ENCODE measurements at regions of chr18 and their contacts with region 1.

Region 1: DNA sequence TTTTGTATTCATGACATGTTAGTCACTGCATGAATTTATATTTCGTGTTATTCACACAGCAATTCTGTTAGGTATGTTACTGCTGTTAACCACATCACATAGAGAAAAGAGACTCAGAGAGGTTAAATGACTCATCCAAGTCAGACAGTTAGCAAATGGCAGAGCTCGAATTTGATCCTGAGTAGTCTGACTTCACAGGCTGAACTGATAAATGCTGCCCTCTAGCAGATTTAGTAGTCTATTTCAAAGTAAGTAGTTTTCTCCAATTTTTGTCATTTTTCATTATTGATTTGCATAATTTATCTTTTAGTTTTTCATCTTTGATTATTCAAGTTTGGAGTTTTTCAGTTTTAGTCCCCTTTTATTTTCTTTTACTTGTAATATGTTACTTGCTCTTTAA is 58.3 kb downstream of the WDR7 start:
- DNase-seq: peak; percentile 56
- H3K4me3 Mint-ChIP-seq: no peak overlapping the region
- H3K27ac Mint-ChIP-seq: no peak overlapping the region
- H3K4me1 Mint-ChIP-seq: peaks cover 3% of the 10 kb centered on the region
- H3K27me3 Mint-ChIP-seq: no peaks in the 10 kb centered on the region

Region 2: DNA sequence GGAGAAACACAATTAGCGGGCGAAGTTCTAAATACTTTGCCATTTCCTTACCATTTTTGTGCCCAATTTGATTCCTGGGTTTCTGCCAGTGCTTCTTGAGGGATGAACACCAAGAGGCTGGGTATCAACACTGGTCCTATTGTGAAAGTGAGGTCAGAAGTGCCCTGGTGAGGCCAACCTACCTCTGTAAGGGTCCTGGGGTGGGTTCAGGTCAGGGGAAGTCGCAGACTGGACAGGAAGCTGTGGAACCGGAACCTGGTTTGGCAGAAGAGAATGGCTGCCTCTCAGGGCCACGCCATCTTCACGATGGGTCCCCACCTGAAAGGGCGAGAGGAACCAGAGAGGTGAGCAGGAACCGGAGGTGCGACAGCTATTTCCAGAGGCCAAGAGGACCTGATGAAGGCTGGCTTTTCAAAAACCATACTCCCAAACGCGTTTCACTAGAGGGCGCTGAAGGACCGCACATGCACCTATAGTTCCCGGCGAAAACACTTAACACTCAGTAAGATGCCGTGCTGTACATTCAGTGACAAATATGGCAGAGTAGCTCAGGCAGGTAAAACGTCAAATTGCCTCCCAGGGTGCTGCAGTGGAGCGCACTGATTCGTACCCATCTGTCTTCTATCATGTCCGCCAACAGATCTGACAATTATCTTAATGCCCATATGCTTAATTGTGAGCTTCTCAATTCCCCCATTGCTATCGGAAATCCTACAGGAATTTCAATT is 1474.9 kb before region 1 on chr18:
- CTCF ChIA-PET with region 1: interaction called, 4 read pairs
- intact Hi-C with region 1: loop called (anchors 5 kb)
- DNase-seq: peak; percentile 77
- H3K4me3 Mint-ChIP-seq: no peak overlapping the region
- H3K27ac Mint-ChIP-seq: no peak overlapping the region
- H3K4me1 Mint-ChIP-seq: no peaks in the 10 kb centered on the region
- H3K27me3 Mint-ChIP-seq: no peaks in the 10 kb centered on the region

Region 3: DNA sequence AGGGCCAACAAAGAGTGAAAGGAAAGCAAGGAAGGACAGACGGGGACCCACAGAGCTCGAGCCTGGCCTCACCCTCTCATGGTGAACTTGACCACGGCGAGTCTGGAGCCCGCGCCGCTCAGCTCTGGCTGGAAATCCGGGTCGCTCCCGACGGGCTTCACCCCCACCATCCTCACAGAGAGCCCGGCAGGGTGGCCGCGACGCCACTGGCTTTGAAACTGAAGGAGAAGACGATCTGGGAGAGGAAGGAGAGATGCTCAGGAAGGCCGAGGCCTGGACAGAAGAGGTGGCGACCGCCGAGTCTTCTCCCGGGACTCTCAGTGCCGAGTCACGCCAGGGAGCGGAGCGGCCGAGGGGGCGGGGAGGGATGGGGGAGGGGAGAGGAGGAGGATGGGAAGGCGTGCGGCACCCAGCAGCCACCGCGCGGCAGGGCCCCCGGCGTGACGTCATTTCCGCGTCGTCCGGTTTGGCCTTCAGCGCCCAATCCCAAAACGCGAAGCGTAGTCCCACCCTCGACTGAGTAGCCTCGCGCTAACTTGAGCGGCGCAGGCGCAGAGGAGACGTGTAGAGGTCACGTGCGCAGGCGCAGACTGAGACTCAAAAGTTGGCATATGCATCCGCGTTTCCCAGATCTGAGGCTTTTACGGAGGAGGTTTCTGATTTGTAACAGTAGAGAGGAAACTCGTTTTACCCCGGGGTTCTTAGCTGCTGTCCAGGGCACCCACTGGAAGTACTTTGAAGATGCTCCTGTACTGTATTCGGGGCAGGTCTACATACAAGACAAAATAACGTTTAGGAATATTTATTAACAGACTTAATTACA is 71.0 kb before region 1 on chr18 and contains the start of gene TXNL1:
- CTCF ChIA-PET with region 1: interaction called, 3 read pairs
- intact Hi-C with region 1: loop called (anchors 1 kb)
- DNase-seq: peak; percentile 99
- H3K4me3 Mint-ChIP-seq: peak within 1 kb of the TSS; percentile 90
- H3K27ac Mint-ChIP-seq: peak within 1 kb of the TSS; percentile 95
- H3K4me1 Mint-ChIP-seq: peaks cover 38% of the 10 kb centered on the region
- H3K27me3 Mint-ChIP-seq: no peaks in the 10 kb centered on the region
- total RNA-seq, gene TXNL1: 64.1 to 68.6 TPM

Region 4: DNA sequence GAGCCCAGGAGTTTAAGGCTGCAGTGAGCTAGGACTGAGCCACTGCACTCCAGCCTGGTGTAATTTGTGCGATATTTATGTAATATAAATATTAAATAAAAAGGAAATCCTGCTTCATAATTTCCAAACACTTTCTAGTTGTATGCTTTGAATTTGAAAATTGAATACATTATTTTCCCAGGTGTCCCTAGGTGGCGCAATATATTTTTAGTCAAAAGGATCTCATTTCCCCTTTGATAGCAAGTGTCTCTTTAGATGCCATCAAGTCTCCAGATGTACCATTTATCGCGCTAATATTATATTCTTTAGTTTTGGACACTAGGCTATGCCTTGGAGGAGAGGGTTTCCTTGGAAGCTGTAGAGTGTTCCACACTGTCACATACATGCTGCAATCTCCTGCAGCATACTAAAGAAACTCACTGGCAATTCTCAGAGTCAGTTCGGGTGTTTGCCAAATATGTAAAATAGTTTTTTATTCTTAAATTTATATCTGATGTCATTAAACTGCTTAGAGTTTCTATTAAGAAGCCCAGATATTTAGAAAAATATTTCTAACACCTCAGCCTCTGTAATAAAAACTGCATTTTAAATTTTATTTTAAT is 63.9 kb before region 1 on chr18:
- CTCF ChIA-PET with region 1: interaction called, 10 read pairs
- intact Hi-C with region 1: loop called (anchors 1 kb)
- DNase-seq: no peak
- H3K4me3 Mint-ChIP-seq: no peak overlapping the region
- H3K27ac Mint-ChIP-seq: no peak overlapping the region
- H3K4me1 Mint-ChIP-seq: peaks cover 2% of the 10 kb centered on the region
- H3K27me3 Mint-ChIP-seq: no peaks in the 10 kb centered on the region

Region 5: GRCh38 chr18:56678836-56679565 is 30.5 kb before region 1 on chr18:
- CTCF ChIA-PET with region 1: no interaction called
- intact Hi-C with region 1: no loop called
- DNase-seq: no peak
- H3K4me3 Mint-ChIP-seq: no peak overlapping the region
- H3K27ac Mint-ChIP-seq: no peak overlapping the region
- H3K4me1 Mint-ChIP-seq: peaks cover 1% of the 10 kb centered on the region
- H3K27me3 Mint-ChIP-seq: no peaks in the 10 kb centered on the region

Region 6: DNA sequence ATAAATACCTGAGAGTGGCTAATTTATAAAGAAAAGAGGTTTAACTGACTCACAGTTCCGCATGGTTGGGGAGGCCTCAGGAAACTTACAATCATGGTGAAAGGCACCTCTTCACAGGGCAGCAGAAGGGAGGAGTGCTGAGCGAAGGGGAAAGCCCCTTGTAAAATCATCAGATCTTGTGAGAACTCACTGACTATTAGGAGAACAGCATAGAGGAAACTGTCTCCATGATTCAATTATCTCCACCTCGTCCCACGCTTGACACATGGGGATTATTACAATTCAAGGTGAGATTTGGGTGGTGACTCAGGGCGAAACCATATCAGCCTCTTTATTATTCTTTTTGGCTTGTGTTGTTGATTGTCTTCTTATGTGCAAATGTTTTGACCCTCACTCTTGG is 17.9 kb after region 1 on chr18:
- CTCF ChIA-PET with region 1: no interaction called
- intact Hi-C with region 1: loop called (anchors 1 kb)
- DNase-seq: peak; percentile 58
- H3K4me3 Mint-ChIP-seq: no peak overlapping the region
- H3K27ac Mint-ChIP-seq: peak overlapping the region; percentile 7
- H3K4me1 Mint-ChIP-seq: peaks cover 17% of the 10 kb centered on the region
- H3K27me3 Mint-ChIP-seq: no peaks in the 10 kb centered on the region

Region 7: GRCh38 chr18:56775701-56776100 is 66.2 kb after region 1 on chr18:
- CTCF ChIA-PET with region 1: no interaction called
- intact Hi-C with region 1: no loop called
- DNase-seq: no peak
- H3K4me3 Mint-ChIP-seq: no peak overlapping the region
- H3K27ac Mint-ChIP-seq: no peak overlapping the region
- H3K4me1 Mint-ChIP-seq: no peaks in the 10 kb centered on the region
- H3K27me3 Mint-ChIP-seq: no peaks in the 10 kb centered on the region

Region 8: DNA sequence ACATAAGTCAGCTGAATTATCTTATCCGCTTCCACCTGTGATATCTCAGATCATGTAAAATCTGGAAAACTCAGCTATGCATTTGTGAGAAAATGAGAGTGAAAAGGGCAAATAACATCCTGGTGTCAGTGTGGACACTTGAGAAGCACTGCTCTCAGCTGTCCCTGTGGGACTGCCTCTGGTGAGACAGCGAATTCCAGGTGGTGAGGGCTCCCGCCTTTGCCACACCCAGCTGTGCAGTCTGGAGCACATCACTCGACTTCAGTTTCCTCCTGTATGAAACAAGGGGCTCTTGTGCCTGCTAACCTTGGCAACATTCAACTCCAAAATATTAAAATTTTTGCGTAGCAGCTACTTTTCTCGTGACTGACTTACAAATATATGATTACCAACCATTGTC is 242.6 kb after region 1 on chr18:
- CTCF ChIA-PET with region 1: no interaction called
- intact Hi-C with region 1: no loop called
- DNase-seq: no peak
- H3K4me3 Mint-ChIP-seq: no peak overlapping the region
- H3K27ac Mint-ChIP-seq: no peak overlapping the region
- H3K4me1 Mint-ChIP-seq: no peaks in the 10 kb centered on the region
- H3K27me3 Mint-ChIP-seq: no peaks in the 10 kb centered on the region

Measured in activated naive CD4-positive, alpha-beta T cell treated with anti-CD3 and anti-CD28 coated beads for 36 hours (primary cell).